ENCODE measurements at regions of chr12 and their contacts with region 1.

Region 1: GRCh38 chr12:69570545-69571399 is 14.5 kb upstream of the CCT2 start:
- DNase-seq: no peak

Region 2: DNA sequence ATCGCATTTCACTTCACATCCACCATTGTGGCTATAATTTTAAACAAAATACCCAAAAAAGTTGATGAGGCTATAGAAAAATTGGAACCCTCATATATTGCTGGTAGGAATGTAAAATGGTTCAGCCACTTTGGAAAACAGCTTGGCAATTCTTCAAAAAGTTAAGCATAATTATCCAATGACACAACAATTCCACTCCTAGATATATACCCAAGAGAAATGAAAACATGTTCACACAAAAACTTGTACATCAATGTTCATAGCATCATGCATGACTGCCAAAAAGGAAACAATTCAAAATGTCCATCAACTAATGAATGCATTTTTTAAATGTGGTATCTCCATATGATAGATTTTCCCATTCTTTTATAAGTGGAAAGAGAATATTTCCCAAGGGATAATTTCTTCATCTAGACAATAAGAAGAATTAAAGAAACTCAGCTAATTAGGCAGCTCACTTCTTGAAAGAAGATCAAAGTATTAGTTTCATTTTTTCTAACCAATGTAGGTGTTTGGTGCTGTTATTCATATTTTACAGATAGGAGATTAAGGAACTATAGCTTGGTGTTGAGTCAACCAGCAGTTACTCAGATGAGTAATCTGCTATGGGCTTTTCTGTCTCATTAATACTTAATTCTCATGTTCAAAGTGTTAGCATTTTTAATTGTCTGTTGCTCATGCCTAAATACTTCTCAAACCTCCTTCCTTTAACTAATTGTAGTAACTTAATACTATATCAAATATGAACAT is 178.4 kb before region 1 on chr12:
- intact Hi-C with region 1: loop called (anchors 5 kb)
- DNase-seq: no peak

Region 3: GRCh38 chr12:69415471-69416275 is 155.1 kb before region 1 on chr12:
- intact Hi-C with region 1: loop called (anchors 5 kb)
- DNase-seq: no peak

Region 4: DNA sequence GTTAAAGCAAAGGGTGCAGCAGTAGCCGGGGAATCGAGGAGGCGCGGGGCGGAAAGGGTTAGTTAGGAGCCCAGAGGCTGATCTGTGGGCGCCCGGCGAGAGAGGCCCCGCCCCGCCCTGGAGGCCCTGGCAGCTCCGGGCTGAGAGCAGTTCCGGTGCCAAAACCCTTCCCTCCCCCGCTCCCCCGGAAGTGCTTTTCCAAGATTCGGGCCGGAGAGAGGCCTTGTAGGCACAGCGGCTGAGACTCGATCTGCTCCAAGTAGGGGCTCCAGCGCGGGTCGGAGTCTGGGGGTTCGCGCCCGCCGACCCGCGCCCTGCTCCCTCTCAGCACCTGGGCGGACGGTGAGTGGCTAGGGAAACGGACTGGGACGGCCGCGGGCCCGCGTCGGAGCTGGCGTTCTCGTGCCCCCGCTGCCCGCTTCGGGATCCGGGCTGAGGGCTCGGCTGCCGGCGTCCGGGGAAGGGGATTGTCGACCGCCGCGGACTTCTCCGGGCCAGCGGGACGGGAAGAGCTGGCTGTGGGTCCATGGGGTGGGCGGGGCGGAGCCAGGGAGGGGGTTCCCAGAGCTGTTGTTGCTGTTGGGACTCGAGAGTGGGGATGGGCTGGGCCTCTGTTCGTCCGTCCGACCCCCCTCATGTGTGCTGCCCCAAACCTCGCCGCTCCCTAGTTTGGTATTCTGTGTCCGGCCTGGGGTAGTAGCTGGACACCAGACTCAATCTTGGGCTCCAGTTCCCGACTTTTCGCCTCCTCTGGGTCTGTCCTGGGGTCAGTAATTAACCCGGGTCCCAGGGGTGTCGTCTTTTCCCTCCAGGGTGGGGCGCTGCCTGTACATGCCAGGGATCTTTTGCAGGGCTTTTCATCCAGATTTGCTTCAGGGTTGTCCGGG is 100.3 kb before region 1 on chr12 and contains the start of gene FRS2:
- intact Hi-C with region 1: loop called (anchors 5 kb)
- DNase-seq: peak; percentile 97
- total RNA-seq, gene FRS2: 22.6 TPM